Tibial artery (tissue), 4 donors: ENCODE measurements at regions of chr10 and their contacts with region 1.

Region 1: GRCh38 chr10:5551531-5552375 is 27.0 kb downstream of the CALML3 start:
- DNase-seq: peak; percentile 13 to 60
- H3K4me3 ChIP-seq: no peak overlapping the region
- H3K27ac ChIP-seq: peak overlapping the region; percentile 79 to 81
- H3K4me1 ChIP-seq: peaks cover 4 to 98% (median 70%) of the 10 kb centered on the region in 4 donors
- H3K27me3 ChIP-seq: no peaks in the 10 kb centered on the region
- CTCF ChIP-seq: no peak

Region 2: DNA sequence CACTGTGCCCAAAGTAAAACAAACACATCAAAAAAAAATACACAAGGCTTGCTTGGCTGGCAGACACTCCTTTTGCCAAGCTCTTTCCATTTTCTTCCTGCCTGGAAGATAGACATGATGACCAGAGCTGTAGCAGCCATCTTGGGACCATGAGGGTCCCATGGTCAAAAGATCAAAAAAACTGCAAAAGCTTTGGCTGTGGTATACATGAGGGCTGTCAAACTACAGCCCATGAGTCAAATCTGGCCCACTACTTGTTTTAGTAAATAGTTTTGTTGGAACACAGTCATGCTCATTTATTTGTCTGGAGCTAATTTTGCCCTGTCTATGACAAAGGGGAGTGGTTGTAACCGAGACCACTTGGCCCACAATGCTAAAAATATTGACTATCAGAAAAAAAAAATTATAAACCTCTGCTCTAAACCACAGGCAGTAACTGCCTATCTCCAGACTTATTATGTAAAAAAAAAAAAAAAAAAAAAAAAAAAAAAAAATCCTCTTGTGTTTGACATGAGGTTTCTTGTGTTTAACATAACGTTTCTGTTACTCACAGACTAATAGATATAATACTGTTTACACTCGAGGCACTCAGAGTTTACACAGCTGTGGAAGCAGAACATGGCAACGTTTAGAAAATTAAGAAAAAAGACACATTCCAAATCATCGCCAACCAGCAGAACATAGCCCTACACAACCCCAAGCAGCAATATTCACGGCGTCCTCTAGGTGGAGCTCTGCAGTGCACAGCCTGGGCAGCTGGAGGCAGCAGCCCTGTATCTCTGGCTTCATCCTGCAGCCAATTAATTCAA is 77.8 kb after region 1 on chr10:
- intact Hi-C with region 1: no loop called
- DNase-seq: peak; percentile 86 to 89
- H3K4me3 ChIP-seq: peak overlapping the region in 1 of 2 donors; percentile 40
- H3K27ac ChIP-seq: peak overlapping the region; percentile 88
- H3K4me1 ChIP-seq: peaks cover 0 to 85% (median 63%) of the 10 kb centered on the region in 4 donors
- H3K27me3 ChIP-seq: no peaks in the 10 kb centered on the region
- CTCF ChIP-seq: peak; percentile 73 to 82

Region 3: GRCh38 chr10:5640036-5640435 is 88.3 kb after region 1 on chr10:
- intact Hi-C with region 1: no loop called
- DNase-seq: no peak
- H3K4me3 ChIP-seq: no peak overlapping the region
- H3K27ac ChIP-seq: no peak overlapping the region
- H3K4me1 ChIP-seq: peaks cover 0 to 26% (median 3%) of the 10 kb centered on the region in 4 donors
- H3K27me3 ChIP-seq: no peaks in the 10 kb centered on the region
- CTCF ChIP-seq: no peak

Region 4: DNA sequence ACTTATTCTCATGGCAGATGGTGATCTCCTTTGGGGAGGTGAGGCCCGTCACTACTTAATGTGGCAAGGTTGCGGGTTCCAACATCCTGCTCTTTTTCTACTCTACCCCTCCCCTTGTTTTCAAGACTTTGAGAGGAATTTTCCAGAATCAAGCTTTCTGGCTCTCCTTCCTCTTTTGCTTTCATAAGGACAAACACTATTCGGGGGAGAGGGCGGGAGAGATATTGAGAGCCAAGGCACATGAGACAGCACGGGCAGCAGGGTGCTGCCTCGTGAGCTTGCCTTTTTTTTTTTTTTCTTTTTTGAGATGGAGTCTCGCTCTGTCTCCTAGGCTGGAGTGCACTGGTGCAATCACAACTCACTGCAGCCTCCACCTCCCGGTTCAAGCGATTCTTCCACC is 644.1 kb after region 1 on chr10:
- intact Hi-C with region 1: loop called (anchors 5 kb)
- DNase-seq: peak; percentile 84 to 90
- H3K4me3 ChIP-seq: no peak overlapping the region
- H3K27ac ChIP-seq: peak overlapping the region; percentile 87 to 95
- H3K4me1 ChIP-seq: peaks cover 0 to 90% (median 52%) of the 10 kb centered on the region in 4 donors
- H3K27me3 ChIP-seq: no peaks in the 10 kb centered on the region
- CTCF ChIP-seq: no peak